Activated naive CD4-positive, alpha-beta T cell treated with anti-CD3 and anti-CD28 coated beads for 36 hours (primary cell): ENCODE measurements at regions of chr22 and their contacts with region 1.

Region 1: DNA sequence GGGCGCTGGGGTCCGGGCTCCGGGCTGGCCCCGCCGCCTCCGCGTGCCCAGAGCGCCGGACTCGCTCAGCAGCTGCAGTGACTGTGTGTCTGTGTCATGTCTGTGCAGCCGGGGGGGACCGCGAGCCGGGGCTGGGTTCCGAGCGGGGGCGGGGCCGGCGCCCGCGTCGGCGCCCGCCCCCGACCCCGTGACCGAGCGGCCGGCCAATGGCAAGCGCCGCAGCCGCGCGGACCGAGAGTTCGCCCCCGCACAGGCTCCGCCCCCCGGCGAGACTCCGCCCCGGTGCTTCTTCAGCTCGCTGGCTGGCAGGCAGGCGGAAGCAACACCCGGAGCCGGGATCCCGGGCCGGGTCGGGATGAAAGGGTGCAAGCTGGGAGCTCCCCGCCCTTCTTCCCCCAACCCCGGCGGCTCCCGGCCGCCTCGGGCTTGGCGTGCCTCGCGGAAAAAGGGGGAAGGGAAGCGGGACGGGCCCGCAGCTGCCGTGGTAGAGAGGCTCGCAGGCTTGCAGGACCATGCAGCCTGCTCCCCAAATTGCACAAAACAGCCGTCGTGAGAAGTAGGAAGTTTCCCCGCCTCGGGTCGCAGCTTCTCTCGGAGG is 750 bp upstream of the LARGE1 start:
- DNase-seq: peak; percentile 94
- H3K4me3 Mint-ChIP-seq: peak overlapping the region; percentile 68
- H3K27ac Mint-ChIP-seq: no peak overlapping the region
- H3K4me1 Mint-ChIP-seq: peaks cover 19% of the 10 kb centered on the region
- H3K27me3 Mint-ChIP-seq: peaks cover 66% of the 10 kb centered on the region

Region 2: GRCh38 chr22:33519071-33519973 is 401.7 kb before region 1 on chr22:
- CTCF ChIA-PET with region 1: no interaction called
- intact Hi-C with region 1: loop called (anchors 5 kb)
- DNase-seq: peak; percentile 11
- H3K4me3 Mint-ChIP-seq: no peak overlapping the region
- H3K27ac Mint-ChIP-seq: no peak overlapping the region
- H3K4me1 Mint-ChIP-seq: no peaks in the 10 kb centered on the region
- H3K27me3 Mint-ChIP-seq: peaks cover 5% of the 10 kb centered on the region

Region 3: DNA sequence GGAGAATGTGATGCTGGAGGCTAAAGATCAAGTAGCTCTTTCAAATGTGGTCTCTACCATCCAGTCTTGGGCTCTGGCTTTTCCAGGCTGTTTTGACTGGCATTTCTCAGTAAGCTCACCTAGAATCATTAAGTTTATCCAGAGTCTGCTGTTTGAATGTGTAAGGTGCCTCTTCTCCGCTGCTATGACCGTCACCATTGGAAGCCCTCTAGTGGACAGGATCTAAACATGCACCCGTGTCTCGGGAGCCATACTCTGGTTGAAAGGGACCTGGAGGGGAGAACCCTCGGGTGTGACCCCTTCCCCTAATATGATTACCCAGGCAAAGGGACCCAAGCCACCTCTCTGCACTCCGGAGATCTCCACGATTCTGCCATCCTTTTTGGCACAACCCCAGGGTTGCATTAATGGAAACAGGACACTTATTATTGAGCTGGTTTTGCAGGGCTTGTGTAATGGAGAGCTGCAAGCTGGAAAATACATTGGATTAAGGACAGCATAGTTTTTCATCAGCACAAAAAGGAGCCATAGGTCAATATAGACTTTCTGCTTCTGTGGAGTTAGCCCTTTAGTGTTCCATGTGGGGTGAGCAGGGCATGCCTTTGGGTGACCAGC is 190.3 kb after region 1 on chr22:
- CTCF ChIA-PET with region 1: interaction called, 10 read pairs
- intact Hi-C with region 1: loop called (anchors 2 kb)
- DNase-seq: peak; percentile 18
- H3K4me3 Mint-ChIP-seq: no peak overlapping the region
- H3K27ac Mint-ChIP-seq: no peak overlapping the region
- H3K4me1 Mint-ChIP-seq: no peaks in the 10 kb centered on the region
- H3K27me3 Mint-ChIP-seq: peaks cover 8% of the 10 kb centered on the region

Region 4: GRCh38 chr22:35023692-35024363 is 1102.8 kb after region 1 on chr22:
- CTCF ChIA-PET with region 1: no interaction called
- intact Hi-C with region 1: loop called (anchors 5 kb)
- DNase-seq: peak; percentile 78
- H3K4me3 Mint-ChIP-seq: no peak overlapping the region
- H3K27ac Mint-ChIP-seq: no peak overlapping the region
- H3K4me1 Mint-ChIP-seq: peaks cover 2% of the 10 kb centered on the region
- H3K27me3 Mint-ChIP-seq: peaks cover 37% of the 10 kb centered on the region